OCI-LY7 (cell line): ENCODE measurements at regions of chr11 and their contacts with region 1.

Region 1: DNA sequence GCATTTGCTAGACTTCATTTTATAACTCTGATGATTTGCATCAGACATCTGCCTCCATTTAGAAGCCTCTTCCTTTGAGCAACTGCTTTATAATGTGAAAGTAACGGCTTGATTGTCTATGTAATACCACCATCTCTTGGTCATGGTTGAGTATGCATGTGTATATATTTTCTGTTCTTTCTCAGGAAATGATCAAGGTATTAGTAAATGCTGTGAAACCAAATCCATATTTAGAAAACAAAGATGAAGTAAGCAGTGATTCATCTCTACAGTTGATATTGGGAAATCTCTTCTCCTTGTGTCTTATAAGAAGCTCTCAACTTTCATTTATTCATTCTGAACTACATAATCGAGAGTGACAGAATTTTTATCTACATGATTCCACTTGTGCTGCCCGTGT is 104.6 kb upstream of the ANO3 start:
- DNase-seq: peak; percentile 82
- H3K4me3 ChIP-seq: no peak overlapping the region
- H3K27ac ChIP-seq: peak overlapping the region; percentile 38
- H3K4me1 ChIP-seq: peaks cover 24% of the 10 kb centered on the region
- CTCF ChIP-seq: peak; percentile 93

Region 2: GRCh38 chr11:26134481-26135355 is 92.6 kb before region 1 on chr11:
- CTCF ChIA-PET with region 1: no interaction called
- POLR2A ChIA-PET with region 1: no interaction called
- intact Hi-C with region 1: loop called (anchors 2 kb)
- DNase-seq: peak; percentile 72
- H3K4me3 ChIP-seq: no peak overlapping the region
- H3K27ac ChIP-seq: peak overlapping the region; percentile 10
- H3K4me1 ChIP-seq: peaks cover 19% of the 10 kb centered on the region
- CTCF ChIP-seq: peak; percentile 87

Region 3: GRCh38 chr11:26199331-26200095 is 27.8 kb before region 1 on chr11:
- CTCF ChIA-PET with region 1: no interaction called
- POLR2A ChIA-PET with region 1: no interaction called
- intact Hi-C with region 1: no loop called
- DNase-seq: no peak
- H3K4me3 ChIP-seq: no peak overlapping the region
- H3K27ac ChIP-seq: no peak overlapping the region
- H3K4me1 ChIP-seq: no peaks in the 10 kb centered on the region
- CTCF ChIP-seq: no peak